T-cell (primary cell): ENCODE measurements at regions of chr7 and their contacts with region 1.

Region 1: DNA sequence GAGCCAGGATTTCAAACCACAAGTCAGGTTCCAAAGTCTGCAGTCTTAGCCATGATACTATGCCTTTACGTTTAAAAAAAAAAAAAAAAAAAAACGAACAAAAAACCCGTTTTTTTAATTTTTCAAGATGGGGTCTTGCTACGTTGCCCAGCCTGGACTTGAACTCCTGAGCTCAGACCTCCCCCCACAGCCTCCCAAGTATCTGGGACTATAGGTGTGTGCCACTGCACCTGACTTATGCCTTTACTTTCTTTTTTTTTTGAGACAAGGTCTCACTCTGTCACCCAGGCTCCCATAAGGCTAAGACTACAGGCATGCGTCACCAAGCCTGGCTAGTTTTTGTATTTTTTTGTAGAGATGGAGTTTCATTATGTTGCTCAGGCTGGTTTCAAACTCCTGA is 14.7 kb downstream of the ASNS start:
- DNase-seq: no peak
- ATAC-seq: no peak
- H3K4me3 ChIP-seq: no peak overlapping the region
- H3K4me3 Mint-ChIP-seq: no peak overlapping the region
- H3K27ac ChIP-seq: no peak overlapping the region
- H3K27ac Mint-ChIP-seq: no peak overlapping the region
- H3K4me1 ChIP-seq: no peaks in the 10 kb centered on the region
- H3K4me1 Mint-ChIP-seq: no peaks in the 10 kb centered on the region
- H3K27me3 ChIP-seq: no peaks in the 10 kb centered on the region
- H3K27me3 Mint-ChIP-seq: no peaks in the 10 kb centered on the region

Region 2: DNA sequence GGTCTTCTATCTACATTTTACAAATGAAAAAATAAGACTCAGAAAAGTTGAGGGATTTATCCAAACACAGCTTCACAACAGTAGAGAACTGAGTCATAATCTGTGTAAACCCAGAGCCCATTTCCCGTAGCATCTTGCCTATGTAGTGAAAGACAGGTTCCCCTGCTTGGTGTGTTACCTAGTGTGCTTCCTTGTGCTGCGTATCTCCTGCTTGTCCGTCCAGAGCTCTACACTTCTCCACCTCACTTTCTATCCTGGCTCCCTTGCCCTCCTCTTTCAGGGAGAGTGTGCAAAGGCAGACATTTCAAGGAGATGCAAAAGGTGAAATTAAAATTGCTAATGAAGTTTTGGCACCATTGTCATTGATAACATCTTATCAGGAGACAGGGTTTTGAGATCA is 16.1 kb after region 1 on chr7:
- CTCF ChIA-PET with region 1: interaction called in 1 of 2 experiments, 12 read pairs
- POLR2A ChIA-PET with region 1: no interaction called
- DNase-seq: no peak
- ATAC-seq: no peak
- H3K4me3 ChIP-seq: no peak overlapping the region
- H3K4me3 Mint-ChIP-seq: no peak overlapping the region
- H3K27ac ChIP-seq: no peak overlapping the region
- H3K27ac Mint-ChIP-seq: peak overlapping the region; percentile 40 to 91
- H3K4me1 ChIP-seq: peaks cover 9 to 20% of the 10 kb centered on the region in 2 experiments
- H3K4me1 Mint-ChIP-seq: peaks cover 16 to 20% (median 18%) of the 10 kb centered on the region in 3 donors
- H3K27me3 ChIP-seq: no peaks in the 10 kb centered on the region
- H3K27me3 Mint-ChIP-seq: no peaks in the 10 kb centered on the region

Region 3: GRCh38 chr7:98294796-98295382 is 437.3 kb after region 1 on chr7:
- CTCF ChIA-PET with region 1: no interaction called
- POLR2A ChIA-PET with region 1: no interaction called
- DNase-seq: peak in 11 of 35 experiments; percentile 14 to 33 (median 20)
- ATAC-seq: peak; percentile 36 to 61 (median 52)
- H3K4me3 ChIP-seq: no peak overlapping the region
- H3K4me3 Mint-ChIP-seq: no peak overlapping the region
- H3K27ac ChIP-seq: no peak overlapping the region
- H3K27ac Mint-ChIP-seq: no peak overlapping the region
- H3K4me1 ChIP-seq: no peaks in the 10 kb centered on the region
- H3K4me1 Mint-ChIP-seq: no peaks in the 10 kb centered on the region
- H3K27me3 ChIP-seq: no peaks in the 10 kb centered on the region
- H3K27me3 Mint-ChIP-seq: no peaks in the 10 kb centered on the region